Right lobe of liver (tissue), 6 donors: ENCODE measurements at regions of chr3 and their contacts with region 1.

Region 1: DNA sequence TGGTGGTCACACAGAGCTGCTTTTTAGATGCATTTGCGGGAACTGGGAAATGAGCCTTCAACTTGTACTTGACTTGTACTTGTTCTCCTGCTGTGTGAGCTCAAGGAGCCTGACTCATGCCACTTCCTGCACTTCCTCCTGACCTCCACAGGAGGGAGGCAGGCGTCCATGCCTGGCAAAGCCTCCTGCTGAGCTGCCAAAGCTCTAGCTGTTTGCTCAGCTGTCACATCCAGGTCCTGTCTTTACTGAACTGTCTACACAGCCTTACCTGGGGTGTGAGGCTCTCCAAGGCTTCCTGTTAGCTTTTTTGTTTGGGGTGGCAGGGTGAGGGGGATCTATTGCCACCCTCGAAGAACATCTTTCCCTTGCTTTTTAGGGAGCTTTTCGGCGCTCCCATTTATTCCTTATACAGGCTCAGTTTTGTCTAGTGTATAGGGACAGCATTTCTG is 6.4 kb downstream of the THPO start:
- DNase-seq: peak; percentile 82 to 85 (median 85)
- ATAC-seq: peak; percentile 94 to 98 (median 96)
- H3K4me3 ChIP-seq: no peak overlapping the region
- H3K27ac ChIP-seq: no peak overlapping the region
- H3K4me1 ChIP-seq: peaks cover 0 to 22% (median 9%) of the 10 kb centered on the region in 4 donors
- H3K27me3 ChIP-seq: no peaks in the 10 kb centered on the region
- CTCF ChIP-seq: peak; percentile 92 to 97 (median 96)
- POLR2A ChIP-seq: no peak

Region 2: DNA sequence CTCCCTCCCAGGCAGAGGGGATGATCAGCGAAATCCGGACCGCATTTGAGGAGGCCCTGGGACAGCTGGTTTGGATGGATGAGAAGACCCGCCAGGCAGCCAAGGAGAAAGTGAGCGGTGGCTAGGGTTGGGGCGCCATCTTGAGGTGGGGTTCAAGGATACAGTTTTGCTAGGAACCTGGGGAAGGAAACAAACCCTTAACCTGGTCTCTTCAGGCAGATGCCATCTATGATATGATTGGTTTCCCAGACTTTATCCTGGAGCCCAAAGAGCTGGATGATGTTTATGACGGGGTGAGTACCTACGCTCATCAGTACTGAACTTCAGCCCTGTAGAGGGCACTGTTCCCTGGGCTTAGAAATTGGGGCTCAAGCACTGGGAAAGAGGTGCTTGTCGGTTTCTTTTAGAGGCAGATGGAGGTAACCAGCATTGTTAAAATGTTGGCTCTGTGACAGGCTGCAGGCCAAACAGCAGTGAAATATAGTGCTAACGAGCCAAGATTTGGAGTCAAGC is 82.1 kb before region 1 on chr3:
- intact Hi-C with region 1: no loop called
- DNase-seq: peak in 2 of 3 donors; percentile 38 to 66
- ATAC-seq: peak; percentile 73 to 80 (median 76)
- H3K4me3 ChIP-seq: no peak overlapping the region
- H3K27ac ChIP-seq: no peak overlapping the region
- H3K4me1 ChIP-seq: no peaks in the 10 kb centered on the region
- H3K27me3 ChIP-seq: no peaks in the 10 kb centered on the region
- CTCF ChIP-seq: peak; percentile 50 to 64 (median 54)
- POLR2A ChIP-seq: no peak

Region 3: GRCh38 chr3:184469423-184469822 is 97.8 kb after region 1 on chr3:
- intact Hi-C with region 1: loop called in 1 of 2 experiments (anchors 10 kb)
- DNase-seq: peak in 1 of 3 donors; percentile 43
- ATAC-seq: peak; percentile 41 to 59 (median 53)
- H3K4me3 ChIP-seq: no peak overlapping the region
- H3K27ac ChIP-seq: no peak overlapping the region
- H3K4me1 ChIP-seq: no peaks in the 10 kb centered on the region
- H3K27me3 ChIP-seq: no peaks in the 10 kb centered on the region
- CTCF ChIP-seq: peak; percentile 31 to 53 (median 34)
- POLR2A ChIP-seq: no peak

Region 4: GRCh38 chr3:184513276-184514170 is 141.9 kb after region 1 on chr3:
- intact Hi-C with region 1: loop called in 1 of 2 experiments (anchors 10 kb)
- DNase-seq: peak; percentile 85 to 87 (median 87)
- ATAC-seq: peak; percentile 98 to 99 (median 98)
- H3K4me3 ChIP-seq: peak overlapping the region in 2 of 3 donors; percentile 28 to 42
- H3K27ac ChIP-seq: no peak overlapping the region
- H3K4me1 ChIP-seq: peaks cover 0 to 6% (median 0%) of the 10 kb centered on the region in 4 donors
- H3K27me3 ChIP-seq: no peaks in the 10 kb centered on the region
- CTCF ChIP-seq: peak; percentile 73 to 88 (median 84)
- POLR2A ChIP-seq: no peak